AG04450 (cell line): ENCODE measurements at regions of chr12 and their contacts with region 1.

Region 1: DNA sequence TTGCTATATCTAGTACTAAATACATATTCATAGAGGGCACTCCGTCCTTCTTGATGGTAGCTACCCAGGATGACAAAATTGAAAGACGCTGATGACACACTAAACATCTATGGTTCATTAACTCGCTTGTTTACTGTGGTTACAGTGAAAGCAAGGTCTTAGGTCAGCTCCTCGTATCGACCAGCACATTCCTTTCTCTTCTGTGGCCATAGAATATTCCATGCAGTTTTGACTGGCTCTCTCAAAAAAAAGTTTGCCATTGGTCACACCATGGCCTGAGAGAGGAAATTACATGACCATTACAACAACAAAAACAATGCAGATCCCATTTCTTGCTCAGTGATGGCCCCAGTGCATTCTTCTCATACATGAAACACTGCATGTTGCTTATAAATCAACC is 411.4 kb upstream of the SOX5 start:
- DNase-seq: no peak
- H3K4me3 ChIP-seq: no peak overlapping the region
- H3K27ac ChIP-seq: no peak overlapping the region
- H3K27me3 ChIP-seq: no peaks in the 10 kb centered on the region
- CTCF ChIP-seq: no peak

Region 2: GRCh38 chr12:24378548-24379407 is 17.9 kb after region 1 on chr12:
- CTCF ChIA-PET with region 1: no interaction called
- POLR2A ChIA-PET with region 1: interaction called, 12 read pairs
- DNase-seq: peak; percentile 86
- H3K4me3 ChIP-seq: no peak overlapping the region
- H3K27ac ChIP-seq: no peak overlapping the region
- H3K27me3 ChIP-seq: no peaks in the 10 kb centered on the region
- CTCF ChIP-seq: no peak

Region 3: GRCh38 chr12:24596768-24597388 is 236.0 kb after region 1 on chr12:
- CTCF ChIA-PET with region 1: interaction called, 10 read pairs
- POLR2A ChIA-PET with region 1: no interaction called
- DNase-seq: no peak
- H3K4me3 ChIP-seq: no peak overlapping the region
- H3K27ac ChIP-seq: no peak overlapping the region
- H3K27me3 ChIP-seq: no peaks in the 10 kb centered on the region
- CTCF ChIP-seq: peak; percentile 78

Region 4: DNA sequence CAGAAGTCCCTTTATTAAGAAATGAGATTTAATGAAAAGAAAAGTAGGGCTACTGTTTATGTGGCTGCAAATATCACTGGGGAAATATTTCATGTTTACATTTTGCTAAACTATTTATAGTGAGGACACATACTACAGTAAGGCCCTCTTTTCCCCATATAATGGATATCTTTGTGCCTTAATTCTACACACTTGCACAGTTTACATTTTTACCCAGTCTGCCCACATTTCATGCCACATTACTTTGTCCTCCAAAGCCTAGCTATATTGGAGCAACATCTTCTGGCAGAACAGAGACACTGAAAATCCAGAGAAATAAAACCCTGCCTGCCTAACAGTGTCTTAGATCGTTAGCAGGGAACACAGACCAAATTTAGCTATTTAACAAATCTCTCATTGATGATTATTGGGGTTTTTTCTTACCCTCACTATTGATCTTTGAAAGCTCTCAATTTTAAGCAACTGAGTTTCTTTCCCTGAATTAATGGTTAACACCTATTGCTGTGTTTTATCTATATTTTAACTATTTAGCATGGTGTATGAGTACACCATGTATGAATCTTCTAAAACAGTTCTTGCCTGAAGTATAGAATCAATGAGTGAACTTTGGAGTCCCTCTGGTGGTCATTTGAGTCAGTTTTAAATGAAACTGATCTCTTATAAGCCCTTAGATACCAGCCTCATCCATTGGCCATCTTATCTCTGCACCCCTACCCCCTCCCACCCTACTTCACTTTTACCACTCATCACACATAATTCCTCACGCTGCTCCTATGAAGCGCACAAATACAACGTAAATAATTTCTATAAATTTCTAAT is 417.8 kb after region 1 on chr12:
- CTCF ChIA-PET with region 1: interaction called, 10 read pairs
- POLR2A ChIA-PET with region 1: no interaction called
- DNase-seq: peak; percentile 34
- H3K4me3 ChIP-seq: no peak overlapping the region
- H3K27ac ChIP-seq: no peak overlapping the region
- H3K27me3 ChIP-seq: no peaks in the 10 kb centered on the region
- CTCF ChIP-seq: peak; percentile 66